Panc1 (cell line): ENCODE measurements at regions of chr1 and their contacts with region 1.

Region 1: DNA sequence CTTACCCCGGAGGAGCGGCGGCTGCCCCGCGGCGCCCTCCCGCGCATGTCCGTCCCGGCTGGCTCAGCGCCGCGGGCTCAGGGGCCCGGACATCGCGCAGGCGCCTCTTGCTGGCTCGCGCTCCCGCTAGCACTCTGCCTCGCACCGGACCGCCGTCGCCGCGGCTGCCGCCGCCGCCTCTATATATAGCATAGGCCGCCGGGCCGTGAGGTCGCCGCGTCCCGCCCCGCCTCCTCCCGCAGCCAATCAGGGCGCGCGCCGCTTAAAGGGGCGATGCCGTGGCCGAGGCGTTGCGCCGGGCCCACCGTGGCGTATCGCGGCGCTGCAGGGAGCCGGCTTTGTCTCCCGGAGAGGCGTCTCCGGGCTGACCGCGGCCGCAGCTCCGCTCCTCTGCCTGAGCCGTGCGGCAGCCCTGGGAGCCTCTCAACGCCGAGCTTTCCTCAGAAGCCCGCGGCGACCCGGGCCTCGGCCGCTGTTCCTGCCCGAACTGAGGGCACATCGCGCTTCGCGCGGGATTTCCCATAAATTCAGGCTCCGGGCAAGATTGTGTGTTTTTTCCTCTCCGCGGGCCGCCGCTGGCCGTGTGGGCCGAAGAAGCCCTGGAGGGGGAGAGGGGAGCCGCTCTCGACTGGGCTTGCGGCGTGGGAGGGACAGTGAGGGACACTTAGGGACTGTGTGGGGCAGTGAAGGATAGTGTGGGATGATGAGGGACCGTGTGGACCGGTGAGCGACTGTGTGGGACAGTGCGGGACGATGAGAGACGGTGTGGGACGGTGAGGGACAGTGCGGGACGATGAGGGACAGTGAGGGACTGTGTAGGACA is at the start of gene ERRFI1:
- DNase-seq: no peak
- ATAC-seq: peak; percentile 79
- H3K4me3 ChIP-seq: peak within 1 kb of the TSS; percentile 94 to 99
- H3K27ac ChIP-seq: peak within 1 kb of the TSS; percentile 99
- H3K4me1 ChIP-seq: peaks cover 27% of the 10 kb centered on the region
- H3K27me3 ChIP-seq: no peaks in the 10 kb centered on the region
- CTCF ChIP-seq: no peak
- total RNA-seq, gene ERRFI1: 299 TPM

Region 2: GRCh38 chr1:8070381-8070811 is 44.0 kb after region 1 on chr1:
- CTCF ChIA-PET with region 1: no interaction called
- POLR2A ChIA-PET with region 1: interaction called, 5 read pairs
- in situ Hi-C with region 1: no loop called
- intact Hi-C with region 1: loop called (anchors 5 kb)
- DNase-seq: no peak
- ATAC-seq: peak; percentile 39; the same call in 1 of the 2 replicates
- H3K4me3 ChIP-seq: no peak overlapping the region; a peak in 1 of 4 replicates
- H3K27ac ChIP-seq: peak overlapping the region; percentile 100
- H3K4me1 ChIP-seq: peaks cover 51% of the 10 kb centered on the region
- H3K27me3 ChIP-seq: no peaks in the 10 kb centered on the region
- CTCF ChIP-seq: no peak

Region 3: GRCh38 chr1:8097077-8097799 is 70.9 kb after region 1 on chr1:
- CTCF ChIA-PET with region 1: no interaction called
- POLR2A ChIA-PET with region 1: interaction called, 4 read pairs
- in situ Hi-C with region 1: no loop called
- intact Hi-C with region 1: loop called (anchors 5 kb)
- DNase-seq: peak; percentile 97
- ATAC-seq: peak; percentile 96
- H3K4me3 ChIP-seq: no peak overlapping the region
- H3K27ac ChIP-seq: peak overlapping the region; percentile 100
- H3K4me1 ChIP-seq: peaks cover 56% of the 10 kb centered on the region
- H3K27me3 ChIP-seq: no peaks in the 10 kb centered on the region
- CTCF ChIP-seq: no peak

Region 4: DNA sequence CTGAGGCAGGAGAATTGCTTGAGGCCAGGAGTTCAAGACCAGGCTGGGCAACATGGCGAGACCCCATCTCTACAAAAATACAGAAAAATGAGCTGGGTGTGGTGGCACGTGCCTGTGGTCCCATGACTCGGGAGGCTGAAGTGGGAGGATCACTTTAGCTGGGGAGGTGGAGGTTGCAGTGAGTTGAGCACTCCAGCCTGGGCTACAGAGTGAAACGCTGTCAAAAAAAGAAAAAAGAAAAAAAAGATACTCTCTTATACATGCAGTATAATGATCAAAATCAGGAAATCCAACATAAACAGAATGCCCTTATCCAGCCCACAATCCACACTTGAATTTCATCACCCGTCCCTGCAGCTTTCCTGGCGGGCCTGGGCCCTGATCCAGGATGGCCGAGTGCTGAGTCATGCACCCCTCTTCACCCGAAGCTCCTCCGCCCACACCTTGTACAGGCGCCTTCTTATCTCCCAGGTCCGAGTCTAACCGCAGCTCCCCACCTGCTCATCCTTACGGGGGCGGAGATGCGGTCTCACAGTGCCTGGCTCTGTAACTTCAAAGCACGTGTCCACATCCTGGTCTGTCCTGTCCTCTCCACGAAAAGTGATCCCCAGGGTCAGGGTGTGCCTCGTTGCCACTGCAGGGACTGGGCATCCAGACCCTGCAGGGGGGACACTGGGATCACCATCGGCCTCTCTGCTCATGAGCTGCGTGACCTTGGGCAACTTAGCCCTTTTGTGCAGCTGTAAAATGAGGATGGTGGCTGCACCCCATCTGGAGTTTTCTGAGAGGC is 171.3 kb after region 1 on chr1:
- CTCF ChIA-PET with region 1: no interaction called
- POLR2A ChIA-PET with region 1: interaction called, 5 read pairs
- in situ Hi-C with region 1: no loop called
- intact Hi-C with region 1: loop called (anchors 10 kb)
- DNase-seq: peak; percentile 64
- ATAC-seq: peak; percentile 55
- H3K4me3 ChIP-seq: no peak overlapping the region
- H3K27ac ChIP-seq: peak overlapping the region; percentile 99
- H3K4me1 ChIP-seq: peaks cover 76% of the 10 kb centered on the region
- H3K27me3 ChIP-seq: no peaks in the 10 kb centered on the region
- CTCF ChIP-seq: no peak

Region 5: GRCh38 chr1:8238851-8239305 is 212.5 kb after region 1 on chr1:
- CTCF ChIA-PET with region 1: interaction called, 15 read pairs
- POLR2A ChIA-PET with region 1: no interaction called
- in situ Hi-C with region 1: no loop called
- intact Hi-C with region 1: loop called (anchors 5 kb)
- DNase-seq: peak; percentile 48
- ATAC-seq: peak; percentile 80
- H3K4me3 ChIP-seq: no peak overlapping the region
- H3K27ac ChIP-seq: peak overlapping the region; percentile 86
- H3K4me1 ChIP-seq: peaks cover 24% of the 10 kb centered on the region
- H3K27me3 ChIP-seq: no peaks in the 10 kb centered on the region
- CTCF ChIP-seq: no peak